A549 (cell line): ENCODE measurements at regions of chr16 and their contacts with region 1.

Region 1: DNA sequence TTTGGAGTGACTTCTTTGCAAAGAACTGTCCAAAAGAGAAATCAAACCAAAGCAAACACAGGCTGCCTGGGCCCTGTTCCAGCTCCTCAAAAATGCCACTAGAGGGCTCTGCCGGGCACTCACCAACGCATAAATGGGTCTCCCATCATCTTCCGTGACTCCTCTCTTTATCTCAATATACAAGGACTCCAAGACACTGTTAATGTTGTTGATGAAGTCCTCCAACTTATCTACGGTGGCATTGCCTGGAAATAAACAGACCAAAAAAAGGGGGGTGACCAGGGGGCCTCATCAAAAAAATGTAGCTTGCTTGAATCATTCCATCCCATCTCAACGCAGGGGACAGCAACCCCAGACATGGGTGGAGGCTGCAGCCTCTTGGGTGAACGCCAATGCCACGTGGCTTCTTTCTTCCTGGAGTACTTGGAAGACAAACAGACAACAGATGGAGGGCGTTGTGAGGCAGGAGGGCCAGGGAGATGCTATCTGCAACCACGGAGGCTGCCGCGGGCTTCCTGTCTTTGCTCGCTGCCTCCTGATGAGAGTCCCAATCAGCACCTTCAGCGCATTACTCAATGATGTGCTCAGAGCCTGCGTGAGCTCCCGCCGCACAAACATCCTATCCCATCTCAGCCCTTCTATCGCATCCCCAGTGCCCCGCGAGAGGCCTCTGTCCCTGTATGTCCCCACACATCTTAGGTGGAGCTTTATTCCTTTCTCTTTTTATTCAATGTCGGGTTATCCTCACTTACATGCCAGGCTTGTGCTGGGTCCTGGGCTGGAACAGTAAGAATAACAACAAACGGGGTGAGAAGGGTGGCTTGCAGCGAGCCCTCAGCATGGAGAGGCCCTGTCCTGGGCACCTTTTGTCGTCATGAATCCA is 32.0 kb downstream of the KDM8 start:
- DNase-seq: peak; percentile 40 to 68
- ATAC-seq: peak; percentile 82 to 91; a peak in 5 of 6 replicates
- H3K4me3 ChIP-seq: no peak overlapping the region
- H3K27ac ChIP-seq: peak overlapping the region; percentile 3 to 61; a peak in 3 of 6 replicates
- H3K4me1 ChIP-seq: peaks cover 11% of the 10 kb centered on the region
- CTCF ChIP-seq: peak; percentile 87
- EP300 ChIP-seq: no peak
- POLR2A ChIP-seq: no peak
- RAD21 ChIP-seq: peak; percentile 85 to 88

Region 2: DNA sequence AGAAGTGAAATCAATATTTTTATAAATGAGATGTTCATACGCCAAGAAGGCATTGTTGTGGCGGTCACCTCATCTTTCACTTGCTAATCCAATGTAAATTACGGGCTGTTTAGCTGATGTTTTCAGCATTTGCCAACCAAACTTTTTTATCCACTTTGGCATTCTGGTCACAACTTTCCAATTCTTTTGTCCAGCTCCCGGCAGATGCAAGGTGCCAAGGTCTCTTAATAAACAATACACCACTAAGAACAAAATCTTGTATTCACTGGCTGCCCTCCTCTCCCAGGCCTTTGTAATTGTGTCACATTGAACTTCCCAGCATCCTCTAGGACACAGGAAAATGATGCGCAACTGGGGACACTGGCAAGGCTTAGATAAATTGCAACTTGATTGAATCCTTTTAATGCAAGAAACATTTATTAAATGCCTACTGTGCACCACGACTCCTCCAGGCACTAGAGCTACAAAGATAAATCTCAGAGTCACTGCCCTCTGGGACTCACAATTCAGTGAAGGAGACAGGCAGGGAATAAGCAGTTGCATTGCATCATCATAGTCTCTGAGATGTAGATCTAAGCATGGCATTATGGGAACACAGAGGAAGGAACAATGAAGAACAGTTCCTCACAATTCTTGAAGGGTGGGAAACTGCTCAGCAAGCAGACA is 334.0 kb before region 1 on chr16:
- CTCF ChIA-PET with region 1: no interaction called
- POLR2A ChIA-PET with region 1: no interaction called
- DNase-seq: no peak
- ATAC-seq: no peak
- H3K4me3 ChIP-seq: no peak overlapping the region
- H3K27ac ChIP-seq: no peak overlapping the region
- H3K4me1 ChIP-seq: no peaks in the 10 kb centered on the region
- CTCF ChIP-seq: no peak
- EP300 ChIP-seq: no peak
- POLR2A ChIP-seq: no peak
- RAD21 ChIP-seq: no peak

Region 3: DNA sequence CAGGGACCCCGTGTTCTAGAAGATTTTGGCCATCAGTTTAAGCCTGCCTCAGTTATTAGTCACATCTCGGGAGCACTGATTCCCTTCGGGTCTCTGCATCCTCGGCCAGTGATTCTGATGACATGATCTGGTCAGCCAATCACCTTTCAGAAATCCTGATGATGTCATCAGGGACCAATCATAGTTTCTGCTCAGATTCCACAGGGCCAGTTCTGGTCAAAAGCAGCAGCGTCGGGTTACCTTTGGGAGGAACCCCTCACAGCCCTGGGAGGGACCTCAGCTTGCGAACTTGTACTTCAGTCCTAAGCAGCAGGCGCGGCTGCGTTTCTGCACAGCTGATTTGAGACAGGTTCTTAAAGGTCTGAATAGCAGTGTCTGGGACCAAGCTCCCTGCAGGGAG is 18.0 kb before region 1 on chr16:
- CTCF ChIA-PET with region 1: interaction called, 72 read pairs
- POLR2A ChIA-PET with region 1: no interaction called
- DNase-seq: peak in 1 of 2 experiments; percentile 29
- ATAC-seq: peak in 1 of 2 experiments; percentile 21; a peak in 2 of 6 replicates
- H3K4me3 ChIP-seq: no peak overlapping the region
- H3K27ac ChIP-seq: no peak overlapping the region
- H3K4me1 ChIP-seq: no peaks in the 10 kb centered on the region; the same call in 2 of the 3 replicates
- CTCF ChIP-seq: no peak
- EP300 ChIP-seq: no peak
- POLR2A ChIP-seq: no peak
- RAD21 ChIP-seq: no peak

Region 4: DNA sequence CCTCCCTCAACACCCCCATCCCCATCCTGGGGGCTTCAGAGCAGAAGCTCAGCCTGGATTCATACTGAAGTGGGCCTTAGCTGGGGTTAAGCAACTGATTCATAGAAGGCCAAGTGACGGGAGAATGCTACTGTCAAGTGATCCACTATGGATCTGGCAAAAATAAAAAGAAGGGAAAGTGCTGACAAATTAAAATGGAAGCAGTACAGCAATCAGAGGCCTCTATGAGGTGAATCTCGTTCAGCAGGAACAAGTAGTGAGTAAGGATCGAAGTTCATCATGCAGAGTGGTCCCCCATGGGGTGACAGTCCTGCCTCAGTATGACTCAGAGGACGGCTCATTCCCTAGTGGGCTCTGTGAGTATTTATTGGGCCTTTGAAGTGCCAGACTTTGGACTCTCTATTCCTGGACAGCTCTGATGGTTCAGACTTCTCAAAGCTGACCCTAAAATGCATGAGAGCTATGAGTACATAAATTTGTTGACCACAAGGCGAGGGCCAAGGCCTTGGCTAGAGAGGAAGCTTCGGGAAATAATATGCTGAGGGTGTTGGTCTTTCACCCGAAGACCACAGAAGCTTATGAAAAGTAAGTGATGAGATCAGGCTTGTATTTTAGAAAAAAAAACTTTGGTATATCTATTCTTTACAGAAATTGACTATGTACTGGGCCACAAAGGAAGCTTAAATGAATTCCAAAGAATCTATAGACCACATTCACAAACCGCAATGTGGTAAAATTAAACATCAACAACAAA is 38.6 kb after region 1 on chr16:
- CTCF ChIA-PET with region 1: interaction called, 24 read pairs
- POLR2A ChIA-PET with region 1: no interaction called
- DNase-seq: peak; percentile 71 to 87
- ATAC-seq: peak; percentile 97 to 99
- H3K4me3 ChIP-seq: no peak overlapping the region
- H3K27ac ChIP-seq: peak overlapping the region; percentile 79 to 80
- H3K4me1 ChIP-seq: peaks cover 31% of the 10 kb centered on the region
- CTCF ChIP-seq: no peak
- EP300 ChIP-seq: peak in 1 of 2 experiments; percentile 57; a peak in 2 of 5 replicates
- POLR2A ChIP-seq: no peak
- RAD21 ChIP-seq: peak in 1 of 2 experiments; percentile 31; a peak in 1 of 5 replicates

Region 5: DNA sequence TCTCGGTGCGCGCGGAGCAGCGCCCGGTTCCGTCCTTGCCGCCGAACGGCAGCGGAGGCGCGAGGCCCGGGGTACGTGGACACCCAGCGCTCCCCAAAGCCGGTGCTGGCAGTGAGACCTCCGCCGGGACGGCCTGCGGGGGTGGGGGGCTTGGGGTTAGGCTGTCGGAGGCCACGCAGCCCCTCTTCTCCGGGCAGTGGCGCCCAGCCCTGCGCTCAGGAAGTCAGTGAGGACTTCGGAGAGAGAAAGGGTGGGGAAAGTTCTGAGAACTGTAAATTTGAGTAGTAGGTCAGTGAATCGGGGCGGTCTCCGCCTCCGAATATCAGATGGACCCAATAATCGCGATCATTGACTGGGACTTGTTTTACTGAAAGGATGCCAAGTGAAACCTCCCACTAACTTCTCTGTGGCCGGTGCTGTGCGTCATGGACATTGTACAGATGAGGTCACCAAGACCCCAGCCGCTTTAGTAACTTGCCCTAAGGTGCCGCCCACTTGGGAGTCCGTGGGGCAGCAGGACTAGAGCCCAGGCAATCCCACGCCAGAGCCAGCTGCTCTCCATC is 78.9 kb after region 1 on chr16:
- CTCF ChIA-PET with region 1: interaction called, 12 read pairs
- POLR2A ChIA-PET with region 1: no interaction called
- DNase-seq: peak; percentile 54 to 68
- ATAC-seq: peak; percentile 21 to 47
- H3K4me3 ChIP-seq: peak overlapping the region; percentile 99
- H3K27ac ChIP-seq: peak overlapping the region; percentile 96 to 97
- H3K4me1 ChIP-seq: peaks cover 31% of the 10 kb centered on the region
- CTCF ChIP-seq: no peak
- EP300 ChIP-seq: no peak
- POLR2A ChIP-seq: no peak
- RAD21 ChIP-seq: no peak

Region 6: DNA sequence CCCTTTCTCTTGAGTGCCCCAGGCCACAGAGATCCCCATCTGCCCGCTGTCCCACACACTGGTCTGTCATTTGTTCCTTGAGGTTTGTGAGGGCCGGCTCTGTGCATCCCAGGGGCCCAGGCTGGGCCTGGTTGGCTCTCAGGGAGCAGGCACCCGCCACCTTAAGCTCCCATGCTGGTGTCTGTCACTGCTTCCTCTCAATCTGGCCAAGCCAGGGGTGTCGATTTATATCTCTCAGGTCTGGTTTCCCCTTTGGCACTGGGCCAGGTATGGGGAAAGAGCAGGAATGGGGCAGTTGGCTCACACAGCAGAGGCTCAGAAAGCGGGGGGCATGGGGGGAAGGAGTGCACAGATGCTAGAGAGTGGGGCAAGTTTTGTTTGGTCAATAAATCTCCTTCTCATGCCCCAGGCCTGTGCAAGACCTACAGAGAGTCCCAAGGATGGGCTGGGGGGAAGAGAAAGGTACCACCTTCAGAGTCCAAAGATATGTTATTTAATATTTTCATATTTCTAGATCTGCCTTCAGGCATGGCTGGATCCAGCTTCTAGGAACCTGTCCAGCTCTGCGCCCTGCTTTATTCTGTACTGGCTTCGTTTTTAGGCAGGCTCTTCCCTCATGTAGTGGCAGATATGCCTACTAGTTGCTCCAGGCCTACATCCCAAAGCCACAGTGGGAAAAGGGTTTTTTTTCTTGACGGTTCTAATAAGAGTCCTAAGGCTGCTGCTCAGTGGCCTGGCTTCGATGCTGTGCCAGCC is 112.8 kb after region 1 on chr16:
- CTCF ChIA-PET with region 1: interaction called, 25 read pairs
- POLR2A ChIA-PET with region 1: no interaction called
- DNase-seq: no peak
- ATAC-seq: no peak
- H3K4me3 ChIP-seq: no peak overlapping the region
- H3K27ac ChIP-seq: no peak overlapping the region
- H3K4me1 ChIP-seq: no peaks in the 10 kb centered on the region
- CTCF ChIP-seq: no peak
- EP300 ChIP-seq: no peak
- POLR2A ChIP-seq: no peak
- RAD21 ChIP-seq: no peak

Region 7: GRCh38 chr16:27455700-27456099 is 220.4 kb after region 1 on chr16:
- CTCF ChIA-PET with region 1: interaction called, 13 read pairs
- POLR2A ChIA-PET with region 1: no interaction called
- DNase-seq: no peak
- ATAC-seq: no peak
- H3K4me3 ChIP-seq: no peak overlapping the region
- H3K27ac ChIP-seq: no peak overlapping the region
- H3K4me1 ChIP-seq: no peaks in the 10 kb centered on the region
- CTCF ChIP-seq: no peak
- EP300 ChIP-seq: no peak
- POLR2A ChIP-seq: no peak
- RAD21 ChIP-seq: no peak